CD8-positive, alpha-beta T cell (primary cell): ENCODE measurements at regions of chr6 and their contacts with region 1.

Region 1: DNA sequence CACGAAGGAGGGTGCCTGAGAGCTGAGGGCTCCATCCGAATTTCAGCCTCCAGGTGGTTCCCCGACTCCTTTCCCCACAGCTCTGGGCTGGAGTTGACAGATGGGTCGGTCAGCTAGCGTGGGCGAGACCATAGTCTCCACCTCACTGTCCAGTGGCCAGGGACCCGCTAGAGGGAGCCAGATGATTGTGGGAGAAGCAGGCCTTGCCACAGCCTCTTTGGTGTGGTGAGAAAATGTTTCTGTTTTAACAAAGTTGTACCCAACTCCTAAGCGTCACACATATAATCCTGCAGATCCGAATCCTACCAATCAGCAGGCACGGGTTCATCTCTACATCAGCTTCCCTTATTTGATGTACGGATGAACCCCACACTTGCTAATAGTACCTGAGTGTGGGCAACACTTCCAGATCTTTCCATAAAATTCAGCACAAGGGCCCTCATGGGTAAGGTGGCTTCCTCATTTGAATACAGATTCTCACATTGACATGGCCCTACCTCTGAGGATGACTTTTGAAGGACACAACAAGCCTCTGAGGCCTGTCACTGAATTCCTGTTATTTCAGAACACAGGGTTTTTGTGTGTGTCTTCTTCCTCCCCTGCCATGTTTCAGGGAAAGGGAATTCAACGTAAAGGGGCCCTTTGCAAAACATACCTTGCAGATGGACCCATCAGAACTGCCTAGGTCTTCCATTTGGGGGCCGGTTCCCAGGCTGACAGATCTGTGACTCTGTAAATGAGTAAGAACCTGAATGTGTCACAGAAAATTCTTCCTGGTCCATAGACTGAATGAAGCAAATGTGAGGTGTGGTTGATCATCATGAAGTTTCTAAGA is 103.2 kb upstream of the DUSP22 start:
- DNase-seq: peak; percentile 54 to 87 (median 79)
- ATAC-seq: peak; percentile 84
- H3K4me3 ChIP-seq: no peak overlapping the region
- H3K4me3 Mint-ChIP-seq: no peak overlapping the region
- H3K27ac ChIP-seq: peak overlapping the region in 1 of 2 experiments; percentile 79
- H3K27ac Mint-ChIP-seq: peak overlapping the region; percentile 62
- H3K4me1 ChIP-seq: peaks cover 17% of the 10 kb centered on the region
- H3K4me1 Mint-ChIP-seq: peaks cover 31% of the 10 kb centered on the region
- H3K27me3 ChIP-seq: no peaks in the 10 kb centered on the region
- H3K27me3 Mint-ChIP-seq: no peaks in the 10 kb centered on the region
- CTCF ChIP-seq: peak; percentile 77

Region 2: DNA sequence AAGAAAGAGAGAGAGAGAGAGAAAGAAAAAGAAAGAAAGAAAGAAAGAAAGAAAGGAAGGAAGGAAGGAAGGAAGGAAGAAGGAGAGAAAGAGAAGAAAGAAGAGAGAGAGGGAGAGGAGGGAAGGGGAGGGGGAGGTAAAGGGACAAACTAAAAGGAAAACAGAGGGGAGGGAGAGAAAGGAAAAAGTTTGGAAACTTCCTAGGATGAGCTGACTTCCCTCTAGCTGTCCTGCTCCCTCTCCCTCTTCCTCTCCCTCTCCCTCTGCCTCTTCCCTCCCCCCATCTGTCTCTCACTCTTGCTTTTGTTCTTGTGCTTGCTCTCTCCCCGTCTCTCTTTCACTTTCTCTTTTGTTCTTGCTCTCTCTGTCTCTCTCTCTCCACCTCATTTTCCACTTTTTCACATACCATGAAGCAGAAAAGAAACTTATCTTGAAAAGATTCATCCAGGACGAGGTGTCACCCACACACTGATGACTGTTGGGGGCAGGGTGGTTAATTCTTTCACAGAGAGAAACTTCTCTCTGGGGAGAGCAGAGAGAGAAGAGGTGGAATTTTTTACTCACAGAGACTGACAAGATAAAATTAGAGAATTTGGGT is 46.8 kb after region 1 on chr6:
- CTCF ChIA-PET with region 1: no interaction called
- POLR2A ChIA-PET with region 1: no interaction called
- intact Hi-C with region 1: loop called (anchors 1 to 2 kb)
- DNase-seq: peak in 4 of 9 experiments; percentile 34 to 88 (median 58)
- ATAC-seq: peak; percentile 90
- H3K4me3 ChIP-seq: peak overlapping the region; percentile 33 to 61
- H3K4me3 Mint-ChIP-seq: peak overlapping the region; percentile 76
- H3K27ac ChIP-seq: peak overlapping the region; percentile 44 to 87
- H3K27ac Mint-ChIP-seq: peak overlapping the region; percentile 90
- H3K4me1 ChIP-seq: peaks cover 26% of the 10 kb centered on the region
- H3K4me1 Mint-ChIP-seq: peaks cover 29% of the 10 kb centered on the region
- H3K27me3 ChIP-seq: no peaks in the 10 kb centered on the region
- H3K27me3 Mint-ChIP-seq: no peaks in the 10 kb centered on the region
- CTCF ChIP-seq: no peak

Region 3: GRCh38 chr6:336159-337019 is 147.4 kb after region 1 on chr6:
- CTCF ChIA-PET with region 1: interaction called, 4 read pairs
- POLR2A ChIA-PET with region 1: no interaction called
- intact Hi-C with region 1: loop called (anchors 2 to 5 kb)
- DNase-seq: peak in 2 of 9 experiments; percentile 23 to 52
- ATAC-seq: no peak
- H3K4me3 ChIP-seq: no peak overlapping the region
- H3K4me3 Mint-ChIP-seq: peak overlapping the region; percentile 38
- H3K27ac ChIP-seq: peak overlapping the region in 1 of 2 experiments; percentile 9
- H3K27ac Mint-ChIP-seq: peak overlapping the region; percentile 50
- H3K4me1 ChIP-seq: peaks cover 54% of the 10 kb centered on the region
- H3K4me1 Mint-ChIP-seq: peaks cover 53% of the 10 kb centered on the region
- H3K27me3 ChIP-seq: no peaks in the 10 kb centered on the region
- H3K27me3 Mint-ChIP-seq: no peaks in the 10 kb centered on the region
- CTCF ChIP-seq: no peak

Region 4: GRCh38 chr6:411421-412145 is 222.5 kb after region 1 on chr6:
- CTCF ChIA-PET with region 1: interaction called, 5 read pairs
- POLR2A ChIA-PET with region 1: no interaction called
- intact Hi-C with region 1: loop called in 1 of 2 experiments (anchors 2 kb)
- DNase-seq: no peak
- ATAC-seq: no peak
- H3K4me3 ChIP-seq: no peak overlapping the region
- H3K4me3 Mint-ChIP-seq: no peak overlapping the region
- H3K27ac ChIP-seq: no peak overlapping the region
- H3K27ac Mint-ChIP-seq: no peak overlapping the region
- H3K4me1 ChIP-seq: no peaks in the 10 kb centered on the region
- H3K4me1 Mint-ChIP-seq: no peaks in the 10 kb centered on the region
- H3K27me3 ChIP-seq: no peaks in the 10 kb centered on the region
- H3K27me3 Mint-ChIP-seq: no peaks in the 10 kb centered on the region
- CTCF ChIP-seq: no peak

Region 5: DNA sequence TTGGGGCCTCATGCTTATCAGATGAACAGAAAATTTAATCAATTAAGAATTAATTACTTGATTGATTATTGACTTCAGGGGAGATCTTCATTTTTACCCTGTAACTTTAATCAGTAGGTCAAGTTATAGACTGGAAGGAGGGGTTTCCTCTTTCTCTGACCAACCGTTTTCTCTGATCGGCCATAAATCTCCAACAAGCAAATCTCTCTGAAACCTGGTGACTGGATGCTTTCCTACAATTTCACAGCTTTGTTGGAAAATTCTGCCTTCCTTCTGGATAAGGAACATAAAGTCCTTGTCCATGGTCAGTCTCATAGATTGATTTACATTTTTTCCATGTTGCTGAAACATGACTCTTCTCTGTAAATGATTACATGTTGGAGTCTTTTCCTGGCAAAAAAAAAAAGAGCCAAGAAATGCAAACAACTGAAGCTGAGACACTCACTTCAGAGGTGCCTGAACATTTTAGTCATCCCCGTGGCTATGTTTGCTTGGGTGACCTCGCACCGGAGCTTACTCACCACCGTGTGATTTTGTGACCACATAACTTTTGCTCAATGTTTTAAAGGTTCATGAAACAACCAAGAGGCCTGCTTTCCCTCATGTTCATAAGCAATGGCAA is 233.5 kb after region 1 on chr6:
- CTCF ChIA-PET with region 1: no interaction called
- POLR2A ChIA-PET with region 1: no interaction called
- intact Hi-C with region 1: no loop called
- DNase-seq: peak in 4 of 9 experiments; percentile 41 to 65 (median 56)
- ATAC-seq: peak; percentile 62
- H3K4me3 ChIP-seq: no peak overlapping the region
- H3K4me3 Mint-ChIP-seq: no peak overlapping the region
- H3K27ac ChIP-seq: no peak overlapping the region
- H3K27ac Mint-ChIP-seq: no peak overlapping the region
- H3K4me1 ChIP-seq: no peaks in the 10 kb centered on the region
- H3K4me1 Mint-ChIP-seq: no peaks in the 10 kb centered on the region
- H3K27me3 ChIP-seq: no peaks in the 10 kb centered on the region
- H3K27me3 Mint-ChIP-seq: no peaks in the 10 kb centered on the region
- CTCF ChIP-seq: no peak

Region 6: GRCh38 chr6:524803-525202 is 335.8 kb after region 1 on chr6:
- CTCF ChIA-PET with region 1: interaction called, 4 read pairs
- POLR2A ChIA-PET with region 1: no interaction called
- intact Hi-C with region 1: loop called in 1 of 2 experiments (anchors 1 kb)
- DNase-seq: peak in 7 of 9 experiments; percentile 21 to 60 (median 37)
- ATAC-seq: no peak
- H3K4me3 ChIP-seq: no peak overlapping the region
- H3K4me3 Mint-ChIP-seq: no peak overlapping the region
- H3K27ac ChIP-seq: no peak overlapping the region
- H3K27ac Mint-ChIP-seq: no peak overlapping the region
- H3K4me1 ChIP-seq: no peaks in the 10 kb centered on the region
- H3K4me1 Mint-ChIP-seq: peaks cover 5% of the 10 kb centered on the region
- H3K27me3 ChIP-seq: no peaks in the 10 kb centered on the region
- H3K27me3 Mint-ChIP-seq: no peaks in the 10 kb centered on the region
- CTCF ChIP-seq: no peak

Region 7: DNA sequence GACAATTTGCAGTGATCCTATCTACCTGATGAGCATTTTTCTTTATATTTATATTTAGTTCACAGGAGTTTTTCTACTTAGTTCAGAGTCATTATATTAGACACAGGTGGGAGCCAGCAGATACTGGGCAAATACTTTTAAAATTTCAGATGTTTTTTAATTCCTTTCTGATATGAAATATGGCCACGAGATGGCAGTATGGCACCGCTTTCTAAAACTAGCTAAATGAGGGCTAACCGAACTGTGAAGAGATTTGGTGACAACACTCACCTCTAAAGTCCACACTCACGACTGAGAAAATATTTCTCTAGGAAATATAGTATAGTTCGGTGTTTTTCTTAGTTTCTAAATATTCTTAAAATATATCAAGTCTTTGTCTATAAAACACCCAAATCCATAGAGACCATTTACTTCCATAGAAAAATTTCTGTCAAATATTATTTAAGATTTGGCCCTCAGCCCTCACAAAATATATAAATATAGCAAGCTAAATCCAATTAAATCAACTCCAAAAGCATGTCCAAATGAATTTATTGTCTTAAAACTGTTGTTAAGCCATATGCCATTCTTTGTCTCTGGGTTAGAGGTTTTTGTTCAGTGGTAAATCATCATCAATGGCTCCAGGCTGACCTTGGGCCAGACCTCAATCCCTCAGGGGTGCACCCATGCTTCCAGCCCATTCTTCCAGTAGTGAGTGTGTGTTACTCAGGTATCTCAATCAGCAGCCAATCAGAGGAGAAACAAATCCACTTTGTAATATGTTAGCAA is 404.3 kb after region 1 on chr6:
- CTCF ChIA-PET with region 1: interaction called, 10 read pairs
- POLR2A ChIA-PET with region 1: no interaction called
- intact Hi-C with region 1: loop called in 1 of 2 experiments (anchors 1 kb)
- DNase-seq: peak; percentile 31 to 76 (median 66)
- ATAC-seq: peak; percentile 61
- H3K4me3 ChIP-seq: no peak overlapping the region
- H3K4me3 Mint-ChIP-seq: no peak overlapping the region
- H3K27ac ChIP-seq: no peak overlapping the region
- H3K27ac Mint-ChIP-seq: peak overlapping the region; percentile 6
- H3K4me1 ChIP-seq: no peaks in the 10 kb centered on the region
- H3K4me1 Mint-ChIP-seq: no peaks in the 10 kb centered on the region
- H3K27me3 ChIP-seq: no peaks in the 10 kb centered on the region
- H3K27me3 Mint-ChIP-seq: no peaks in the 10 kb centered on the region
- CTCF ChIP-seq: peak; percentile 78

Region 8: GRCh38 chr6:1396952-1397868 is 1208.2 kb after region 1 on chr6:
- CTCF ChIA-PET with region 1: interaction called, 3 read pairs
- POLR2A ChIA-PET with region 1: no interaction called
- intact Hi-C with region 1: loop called (anchors 2 to 5 kb)
- DNase-seq: peak; percentile 38 to 82 (median 66)
- ATAC-seq: peak; percentile 61
- H3K4me3 ChIP-seq: no peak overlapping the region
- H3K4me3 Mint-ChIP-seq: no peak overlapping the region
- H3K27ac ChIP-seq: no peak overlapping the region
- H3K27ac Mint-ChIP-seq: no peak overlapping the region
- H3K4me1 ChIP-seq: peaks cover 3% of the 10 kb centered on the region
- H3K4me1 Mint-ChIP-seq: peaks cover 5% of the 10 kb centered on the region
- H3K27me3 ChIP-seq: peaks cover 5 to 13% of the 10 kb centered on the region in 2 experiments
- H3K27me3 Mint-ChIP-seq: peaks cover 52% of the 10 kb centered on the region
- CTCF ChIP-seq: peak; percentile 86